Activated CD4-positive, alpha-beta T cell treated with anti-CD3 and anti-CD28 coated beads for 36 hours (primary cell): ENCODE measurements at regions of chr19 and their contacts with region 1.

Region 1: GRCh38 chr19:37077934-37078725 is at the start of gene ZNF420:
- DNase-seq: peak; percentile 93
- ATAC-seq: peak; percentile 95
- H3K4me3 Mint-ChIP-seq: peak within 1 kb of the TSS; percentile 97
- H3K27ac Mint-ChIP-seq: peak within 1 kb of the TSS; percentile 98
- H3K4me1 Mint-ChIP-seq: peaks cover 23% of the 10 kb centered on the region
- H3K27me3 Mint-ChIP-seq: no peaks in the 10 kb centered on the region
- total RNA-seq, gene ZNF420: 9.1 to 12.8 TPM

Region 2: GRCh38 chr19:36489118-36489919 is 588.8 kb before region 1 on chr19 and contains the start of gene ZNF566:
- CTCF ChIA-PET with region 1: no interaction called
- POLR2A ChIA-PET with region 1: no interaction called
- intact Hi-C with region 1: loop called in 1 of 2 experiments (anchors 1 kb)
- DNase-seq: peak; percentile 97
- ATAC-seq: peak; percentile 93
- H3K4me3 Mint-ChIP-seq: peak within 1 kb of the TSS; percentile 86
- H3K27ac Mint-ChIP-seq: peak within 1 kb of the TSS; percentile 98
- H3K4me1 Mint-ChIP-seq: peaks cover 24% of the 10 kb centered on the region
- H3K27me3 Mint-ChIP-seq: no peaks in the 10 kb centered on the region
- total RNA-seq, gene ZNF566: 4.7 to 5.9 TPM

Region 3: GRCh38 chr19:36665832-36666231 is 412.3 kb before region 1 on chr19:
- CTCF ChIA-PET with region 1: no interaction called
- POLR2A ChIA-PET with region 1: no interaction called
- intact Hi-C with region 1: loop called in 1 of 2 experiments (anchors 1 kb)
- DNase-seq: no peak
- ATAC-seq: no peak
- H3K4me3 Mint-ChIP-seq: peak overlapping the region; percentile 98
- H3K27ac Mint-ChIP-seq: peak overlapping the region; percentile 99
- H3K4me1 Mint-ChIP-seq: peaks cover 26% of the 10 kb centered on the region
- H3K27me3 Mint-ChIP-seq: no peaks in the 10 kb centered on the region

Region 4: DNA sequence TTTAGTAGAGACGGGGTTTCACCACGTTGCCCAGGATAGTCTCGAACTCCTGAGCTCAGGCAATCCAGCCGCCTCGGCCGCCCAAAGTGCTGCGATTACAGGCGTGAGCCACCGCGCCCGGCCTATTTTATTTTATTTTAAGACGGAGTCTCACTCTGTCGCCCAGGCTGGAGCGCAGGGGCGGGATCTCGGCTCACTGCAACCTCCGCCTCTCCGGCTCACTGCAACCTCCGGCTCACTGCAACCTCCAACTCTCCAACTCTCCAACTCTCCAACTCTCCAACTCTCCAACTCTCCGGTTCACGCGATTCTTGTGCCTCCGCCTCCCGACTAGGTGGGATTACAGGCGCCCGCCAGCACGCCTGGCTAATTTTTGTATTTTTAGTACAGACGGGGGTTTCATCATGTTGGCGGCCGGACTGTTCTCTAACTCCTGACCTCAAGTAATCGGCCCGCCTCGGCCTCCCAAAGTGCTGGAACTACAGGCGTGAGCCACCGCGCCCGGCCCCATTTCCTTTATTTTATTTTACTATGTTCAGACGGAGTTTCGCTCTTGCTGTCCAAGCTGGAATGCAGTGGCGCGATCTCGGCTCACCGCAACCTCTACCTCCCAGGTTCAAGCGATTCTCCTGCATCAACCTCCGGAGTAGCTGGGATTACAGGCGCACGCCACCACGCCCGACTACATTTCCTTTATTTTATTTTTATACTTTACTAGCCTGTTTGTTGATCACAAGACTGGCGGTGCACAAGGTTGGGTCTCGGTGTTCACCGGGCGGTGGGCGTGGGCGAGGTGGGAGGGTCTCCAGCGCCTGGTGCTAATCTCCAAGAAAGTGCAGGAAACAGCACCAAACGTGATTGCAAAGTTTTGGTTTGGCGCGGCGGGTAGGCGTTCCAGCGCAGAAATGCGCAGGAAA is 281.8 kb before region 1 on chr19:
- CTCF ChIA-PET with region 1: no interaction called
- POLR2A ChIA-PET with region 1: no interaction called
- intact Hi-C with region 1: loop called in 1 of 2 experiments (anchors 1 kb)
- DNase-seq: no peak
- ATAC-seq: no peak
- H3K4me3 Mint-ChIP-seq: peak overlapping the region; percentile 83
- H3K27ac Mint-ChIP-seq: peak overlapping the region; percentile 92
- H3K4me1 Mint-ChIP-seq: peaks cover 14% of the 10 kb centered on the region
- H3K27me3 Mint-ChIP-seq: peaks cover 4% of the 10 kb centered on the region

Region 5: GRCh38 chr19:36973021-36973843 is 104.9 kb before region 1 on chr19:
- CTCF ChIA-PET with region 1: interaction called, 6 read pairs
- POLR2A ChIA-PET with region 1: no interaction called
- intact Hi-C with region 1: loop called in 1 of 2 experiments (anchors 1 kb)
- DNase-seq: peak; percentile 92
- ATAC-seq: peak; percentile 98
- H3K4me3 Mint-ChIP-seq: peak overlapping the region; percentile 81
- H3K27ac Mint-ChIP-seq: peak overlapping the region; percentile 92
- H3K4me1 Mint-ChIP-seq: peaks cover 6% of the 10 kb centered on the region
- H3K27me3 Mint-ChIP-seq: no peaks in the 10 kb centered on the region

Region 6: DNA sequence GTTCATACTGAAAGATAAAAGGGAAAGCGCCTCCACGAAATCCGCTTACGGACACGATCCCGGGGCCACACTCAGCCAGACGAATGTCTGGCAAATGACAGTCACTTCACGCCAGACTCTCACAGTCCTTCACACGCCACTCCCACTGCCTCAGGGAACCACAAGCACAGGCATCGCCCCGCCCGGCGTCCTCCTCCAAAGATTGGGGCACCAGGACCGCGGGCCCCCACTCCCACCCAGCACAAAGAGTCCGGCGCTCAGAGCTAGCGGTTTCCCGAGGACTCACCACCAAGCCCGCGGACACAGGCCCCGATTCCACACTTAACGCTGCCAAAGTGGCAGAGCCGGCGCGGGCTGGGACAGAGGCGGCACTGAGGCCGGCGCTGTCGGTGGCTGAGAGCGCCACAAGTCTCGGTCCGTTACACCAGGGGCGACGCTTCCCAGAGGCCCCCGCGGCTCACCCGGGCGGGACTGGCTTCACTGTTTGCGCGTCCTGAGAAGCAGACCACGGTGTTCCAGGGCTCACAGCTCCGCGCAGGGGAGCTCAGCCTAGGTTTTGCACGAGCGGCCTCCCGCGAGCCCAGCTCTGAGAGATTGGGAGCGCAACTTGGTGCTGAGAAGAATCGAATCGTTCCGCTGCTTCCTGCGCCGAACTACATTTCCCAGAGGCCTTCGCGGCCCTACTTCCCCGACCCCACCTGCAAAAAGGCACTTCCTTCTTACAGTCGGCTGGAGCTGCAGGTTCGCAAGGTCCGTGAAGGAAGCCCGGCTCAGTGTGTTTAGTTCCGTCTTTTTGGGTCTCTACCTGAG is 388.9 kb after region 1 on chr19 and contains the start of gene ZNF569:
- CTCF ChIA-PET with region 1: no interaction called
- POLR2A ChIA-PET with region 1: no interaction called
- intact Hi-C with region 1: loop called in 1 of 2 experiments (anchors 1 kb)
- DNase-seq: peak; percentile 93
- ATAC-seq: peak; percentile 71
- H3K4me3 Mint-ChIP-seq: peak within 1 kb of the TSS; percentile 94
- H3K27ac Mint-ChIP-seq: peak within 1 kb of the TSS; percentile 95
- H3K4me1 Mint-ChIP-seq: peaks cover 31% of the 10 kb centered on the region
- H3K27me3 Mint-ChIP-seq: no peaks in the 10 kb centered on the region
- total RNA-seq, gene ZNF569: 7.4 to 9.1 TPM

Region 7: GRCh38 chr19:37655689-37656371 is 577.7 kb after region 1 on chr19:
- CTCF ChIA-PET with region 1: no interaction called
- POLR2A ChIA-PET with region 1: no interaction called
- intact Hi-C with region 1: loop called in 1 of 2 experiments (anchors 2 kb)
- DNase-seq: peak; percentile 93
- ATAC-seq: peak; percentile 79
- H3K4me3 Mint-ChIP-seq: peak overlapping the region; percentile 94
- H3K27ac Mint-ChIP-seq: peak overlapping the region; percentile 99
- H3K4me1 Mint-ChIP-seq: peaks cover 33% of the 10 kb centered on the region
- H3K27me3 Mint-ChIP-seq: no peaks in the 10 kb centered on the region